ENCODE measurements at regions of chr2 and their contacts with region 1.

Region 1: GRCh38 chr2:23545396-23545795 is 160.4 kb downstream of the KLHL29 start:
- DNase-seq: peak; percentile 56
- H3K4me3 ChIP-seq: no peak overlapping the region
- H3K27ac ChIP-seq: peak overlapping the region; percentile 73
- H3K4me1 ChIP-seq: peaks cover 33% of the 10 kb centered on the region
- H3K27me3 ChIP-seq: no peaks in the 10 kb centered on the region
- CTCF ChIP-seq: peak in 1 of 2 donors; percentile 36
- POLR2A ChIP-seq: peak; percentile 10

Region 2: DNA sequence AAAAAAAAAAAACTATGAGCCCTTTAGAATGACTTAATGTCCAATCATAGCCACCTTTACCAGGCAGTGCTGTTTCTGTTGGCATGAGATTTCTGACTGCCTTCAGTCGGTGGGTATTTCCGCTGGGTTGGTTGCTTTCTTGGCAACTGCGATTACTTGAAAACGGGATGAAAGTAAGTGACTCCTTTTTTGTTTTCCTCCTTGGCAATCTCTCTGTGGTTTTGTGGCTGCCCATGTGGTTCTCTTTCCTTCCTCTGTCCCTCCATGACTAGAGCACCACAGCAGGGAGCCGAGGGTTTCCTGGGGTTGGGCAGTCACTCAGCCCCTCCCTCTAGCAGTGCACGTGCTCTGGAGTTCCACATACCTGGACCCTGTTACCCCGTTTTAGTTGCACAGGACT is 48.3 kb before region 1 on chr2:
- CTCF ChIA-PET with region 1: interaction called, 3 read pairs
- POLR2A ChIA-PET with region 1: no interaction called
- dilution Hi-C with region 1: no loop called
- intact Hi-C with region 1: loop called (anchors 2 kb)
- DNase-seq: peak; percentile 75
- H3K4me3 ChIP-seq: no peak overlapping the region
- H3K27ac ChIP-seq: no peak overlapping the region
- H3K4me1 ChIP-seq: peaks cover 14% of the 10 kb centered on the region
- H3K27me3 ChIP-seq: no peaks in the 10 kb centered on the region
- CTCF ChIP-seq: no peak
- POLR2A ChIP-seq: no peak

Measured in endothelial cell of umbilical vein (primary cell).